ENCODE measurements at regions of chr18 and their contacts with region 1.

Region 1: DNA sequence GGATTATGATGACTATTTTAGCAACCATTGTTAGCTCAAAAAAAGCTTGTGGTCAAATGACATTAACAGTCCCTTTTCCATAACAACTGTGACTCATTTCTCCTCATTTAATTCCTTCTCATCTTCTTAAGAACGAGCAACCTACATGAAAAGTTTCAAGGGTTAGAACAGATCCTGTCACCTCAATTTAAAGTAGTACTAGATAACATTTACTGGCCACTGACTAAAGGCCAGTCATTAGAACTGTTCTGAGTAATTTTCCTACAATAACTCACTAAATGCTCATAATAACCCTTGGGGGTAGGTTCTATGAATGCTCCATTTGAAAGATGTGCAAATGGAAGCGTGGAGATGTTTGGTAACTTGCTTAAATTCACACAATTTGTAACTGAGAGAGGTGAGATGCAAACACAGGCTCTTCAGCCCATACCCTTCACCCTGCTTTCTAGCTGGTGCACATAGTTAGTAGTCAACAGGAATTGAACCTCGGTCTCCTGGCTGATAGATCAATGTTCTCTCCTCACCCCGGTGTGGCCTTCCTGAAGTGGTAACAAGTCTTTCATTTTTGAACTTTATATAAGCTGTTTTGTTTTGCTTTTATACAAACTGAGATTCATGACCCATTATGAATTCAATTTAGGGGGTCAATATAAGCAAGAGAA is 212.5 kb downstream of the SETBP1 start:
- DNase-seq: no peak
- ATAC-seq: peak; percentile 78
- H3K4me3 Mint-ChIP-seq: peak overlapping the region; percentile 45
- H3K27ac Mint-ChIP-seq: peak overlapping the region; percentile 87
- H3K4me1 Mint-ChIP-seq: peaks cover 54% of the 10 kb centered on the region
- H3K27me3 Mint-ChIP-seq: no peaks in the 10 kb centered on the region
- CTCF ChIP-seq: no peak

Region 2: GRCh38 chr18:44680266-44681075 is 212.7 kb before region 1 on chr18 and contains the start of gene SETBP1:
- CTCF ChIA-PET with region 1: interaction called, 7 read pairs
- POLR2A ChIA-PET with region 1: interaction called, 4 read pairs
- intact Hi-C with region 1: loop called (anchors 5 kb)
- DNase-seq: peak; percentile 75
- ATAC-seq: peak; percentile 50
- H3K4me3 Mint-ChIP-seq: no peak within 1 kb of the TSS
- H3K27ac Mint-ChIP-seq: peak within 1 kb of the TSS; percentile 87
- H3K4me1 Mint-ChIP-seq: no peaks in the 10 kb centered on the region
- H3K27me3 Mint-ChIP-seq: peaks cover 25% of the 10 kb centered on the region
- CTCF ChIP-seq: no peak
- total RNA-seq, gene SETBP1: 10.2 to 10.4 TPM